HEK293 (cell line): ENCODE measurements at regions of chr5 and their contacts with region 1.

Region 1: DNA sequence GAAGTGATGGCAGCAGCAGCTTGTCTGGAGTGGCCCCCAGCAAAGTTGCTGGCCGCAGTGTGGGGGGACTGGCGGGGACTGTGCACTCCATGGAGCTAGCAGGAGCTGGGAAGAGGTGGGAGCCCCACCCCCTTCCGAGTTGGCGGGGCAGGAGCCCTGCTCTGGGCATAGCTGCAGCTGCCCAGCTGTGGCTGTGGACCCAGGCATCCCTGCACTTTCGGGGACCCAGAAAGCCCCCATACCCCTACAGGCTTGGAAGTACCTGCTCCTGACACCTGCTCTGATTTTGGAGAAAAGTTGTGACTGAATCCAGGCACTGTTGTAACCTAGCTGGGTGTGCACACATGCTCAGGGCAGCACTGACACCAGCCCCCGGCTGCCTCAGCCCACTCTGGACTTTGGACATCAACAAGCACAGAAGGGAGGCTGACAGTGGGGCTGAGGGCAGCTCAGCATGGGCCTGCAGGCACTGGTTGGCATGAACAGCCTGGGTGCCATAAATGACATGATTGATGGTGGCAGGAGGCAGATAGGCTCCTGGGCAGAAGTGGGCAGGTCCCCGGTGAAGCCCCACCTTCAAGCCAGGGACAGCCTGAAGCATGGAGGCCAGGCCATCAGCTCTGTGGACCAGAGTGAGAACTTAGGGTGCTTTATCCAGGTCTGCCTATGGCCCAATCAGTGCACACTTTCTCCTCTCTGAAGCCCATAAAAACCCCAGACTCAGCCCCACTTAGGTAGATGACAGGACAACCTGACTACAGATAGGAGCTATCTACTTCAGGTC is 12.6 kb downstream of the LMBRD2 start:
- H3K4me3 ChIP-seq: no peak overlapping the region
- H3K27ac ChIP-seq: no peak overlapping the region
- H3K4me1 ChIP-seq: no peaks in the 10 kb centered on the region
- CTCF ChIP-seq: no peak

Region 2: DNA sequence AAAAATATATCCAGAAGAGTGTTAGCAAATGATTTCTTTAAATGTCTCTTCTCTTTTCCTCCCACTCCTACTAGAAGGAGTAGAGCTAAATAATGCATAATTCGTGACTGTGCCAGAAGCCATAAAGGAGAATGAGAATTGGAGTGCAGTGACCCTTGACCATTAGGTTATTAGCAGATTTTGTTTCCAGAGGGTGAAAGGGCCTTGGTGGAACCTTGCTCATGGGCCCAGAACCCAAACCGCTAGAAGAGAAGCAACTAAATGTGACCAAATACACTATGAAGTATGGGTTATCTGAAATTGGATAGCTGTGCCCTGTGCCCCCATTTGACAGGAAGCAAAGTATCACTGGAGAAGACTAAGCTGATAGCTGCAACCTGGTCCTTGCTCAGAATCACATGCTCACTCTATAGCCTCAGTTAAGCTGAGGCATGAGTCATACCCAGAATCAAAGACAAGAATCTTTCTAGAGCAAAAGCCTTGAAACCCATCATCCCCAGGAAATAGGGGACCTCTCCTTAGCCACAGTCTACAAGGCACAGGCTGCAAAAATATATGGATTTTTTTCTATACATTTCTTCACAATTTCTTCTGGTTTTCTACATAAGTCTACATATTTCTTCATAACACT is 236.9 kb before region 1 on chr5:
- CTCF ChIA-PET with region 1: no interaction called
- POLR2A ChIA-PET with region 1: no interaction called
- H3K4me3 ChIP-seq: no peak overlapping the region
- H3K27ac ChIP-seq: no peak overlapping the region
- H3K4me1 ChIP-seq: no peaks in the 10 kb centered on the region
- CTCF ChIP-seq: no peak

Region 3: DNA sequence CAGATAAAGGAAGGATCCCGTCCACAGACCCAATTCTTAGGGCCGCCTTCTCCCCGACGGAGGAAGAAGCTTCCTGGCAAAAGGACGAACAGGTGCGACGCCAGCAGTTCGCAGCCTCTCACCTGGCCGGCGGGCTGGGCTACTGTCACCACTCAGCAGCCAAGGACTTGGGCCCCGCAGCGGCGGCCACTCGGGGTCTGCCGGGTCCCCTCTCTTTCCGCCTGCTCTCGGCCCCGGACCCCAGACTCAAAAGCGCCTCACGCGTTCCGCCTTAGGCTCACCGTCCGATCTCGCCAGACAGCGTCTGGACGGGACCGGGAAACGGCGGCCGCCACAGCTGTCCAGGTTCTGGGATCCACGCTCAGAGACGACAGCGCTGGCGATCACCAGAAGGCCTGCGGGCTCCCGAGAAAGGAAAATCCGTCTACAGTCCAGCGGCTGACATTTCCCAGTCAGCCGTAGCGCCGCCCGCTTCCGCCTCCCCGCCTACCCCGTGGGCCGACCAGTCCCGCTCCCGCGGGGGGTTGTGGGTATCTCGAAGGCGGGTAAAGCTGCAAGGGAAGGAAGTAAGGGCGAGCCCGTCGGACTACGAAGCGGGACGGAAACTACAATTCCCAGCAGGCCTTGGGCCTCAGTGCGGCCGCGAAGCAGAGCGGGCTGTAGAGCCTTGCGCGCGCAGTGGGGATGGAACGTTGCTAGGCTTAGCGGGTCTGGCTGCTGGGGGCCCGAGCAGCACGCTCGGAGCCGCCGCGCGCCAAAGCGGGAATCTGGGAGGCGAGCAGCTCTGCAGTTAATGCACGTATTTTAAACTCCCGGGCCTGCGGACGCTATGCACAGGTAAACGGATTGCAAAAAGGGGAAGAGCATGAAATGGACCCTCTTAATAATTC is 12.6 kb after region 1 on chr5 and contains the starts of genes LMBRD2 and SKP2:
- CTCF ChIA-PET with region 1: interaction called, 3 read pairs
- POLR2A ChIA-PET with region 1: interaction called, 19 read pairs
- H3K4me3 ChIP-seq: peak within 1 kb of the TSS; percentile 90
- H3K27ac ChIP-seq: peak within 1 kb of the TSS; percentile 74
- H3K4me1 ChIP-seq: peaks cover 11% of the 10 kb centered on the region
- CTCF ChIP-seq: peak; percentile 44; the same call in 1 of the 2 replicates